ENCODE measurements at regions of chr22 and their contacts with region 1.

Region 1: DNA sequence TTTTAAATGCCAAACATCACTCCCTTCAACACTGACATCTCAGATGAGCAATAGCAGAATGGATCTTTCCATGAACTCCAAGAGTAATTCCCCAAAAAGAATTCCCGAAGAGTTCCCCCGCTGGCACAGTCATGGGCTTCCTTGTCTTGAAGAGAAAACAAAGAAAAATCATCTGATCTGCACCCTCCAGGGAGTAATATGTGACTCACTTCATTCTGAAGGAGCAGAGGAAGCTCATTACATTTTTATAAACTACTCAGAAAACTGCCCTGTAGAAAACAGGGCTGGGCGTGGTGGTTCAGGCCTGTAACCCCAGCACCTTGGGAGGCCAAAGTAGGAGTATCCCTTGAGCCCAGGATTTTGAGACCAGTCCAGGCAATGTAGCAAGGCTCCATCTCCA is 35.7 kb downstream of the CELSR1 start:
- DNase-seq: peak; percentile 60 to 87
- H3K4me3 ChIP-seq: no peak overlapping the region
- H3K27ac ChIP-seq: peak overlapping the region; percentile 81
- H3K4me1 ChIP-seq: peaks cover 32% of the 10 kb centered on the region
- H3K27me3 ChIP-seq: no peaks in the 10 kb centered on the region
- CTCF ChIP-seq: no peak

Region 2: DNA sequence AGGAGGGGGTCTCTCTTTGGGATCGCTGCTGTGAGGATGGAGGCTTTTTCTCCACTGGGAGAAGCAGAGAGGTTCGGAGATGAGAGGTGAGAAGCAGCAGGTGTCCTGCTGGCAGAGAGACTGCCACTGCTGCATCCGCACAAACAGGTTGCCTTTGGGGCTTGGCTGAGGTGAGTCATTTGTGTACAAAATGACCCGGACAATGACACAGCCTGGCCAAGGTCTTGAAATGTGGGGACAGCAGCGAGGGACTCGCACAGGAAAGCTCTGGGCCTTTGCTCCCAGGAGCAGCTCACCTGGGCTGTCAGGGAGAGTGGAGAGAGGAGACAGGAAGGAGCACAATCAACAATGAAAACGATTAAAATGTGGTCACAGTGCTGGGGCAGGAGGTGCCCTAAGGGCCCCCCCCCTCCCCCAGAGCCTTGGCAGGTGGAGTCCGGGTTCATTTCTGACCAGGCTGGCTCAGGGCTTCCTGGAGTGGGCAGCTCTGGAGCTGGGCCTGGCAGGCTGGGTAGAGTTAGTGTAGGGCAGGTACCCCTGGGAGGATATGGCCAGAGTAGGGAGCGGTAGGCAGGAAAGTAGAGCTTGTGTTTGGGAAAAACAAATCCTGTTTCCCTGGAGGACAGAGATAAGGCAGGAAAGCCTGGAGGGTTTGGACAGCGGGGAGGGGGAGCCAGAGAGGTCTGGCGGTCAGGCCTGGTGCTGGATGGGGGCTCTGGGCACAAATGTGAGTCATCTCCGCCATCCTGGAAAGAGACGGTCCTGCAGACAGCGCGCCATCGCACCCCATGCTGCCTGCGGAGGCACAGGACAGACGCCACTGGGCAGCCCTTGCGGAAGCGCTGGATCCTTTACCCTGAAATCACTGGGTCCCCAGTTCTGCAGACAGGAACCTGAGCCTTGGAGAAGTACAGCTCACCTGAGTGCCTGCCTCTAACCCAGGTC is 73.5 kb after region 1 on chr22:
- CTCF ChIA-PET with region 1: no interaction called
- POLR2A ChIA-PET with region 1: interaction called, 10 read pairs
- intact Hi-C with region 1: no loop called
- DNase-seq: peak; percentile 82 to 96
- H3K4me3 ChIP-seq: peak overlapping the region; percentile 66
- H3K27ac ChIP-seq: peak overlapping the region; percentile 85
- H3K4me1 ChIP-seq: peaks cover 45% of the 10 kb centered on the region
- H3K27me3 ChIP-seq: no peaks in the 10 kb centered on the region
- CTCF ChIP-seq: no peak

Measured in PC-9 (cell line).